ENCODE measurements at regions of chr9 and their contacts with region 1.

Region 1: GRCh38 chr9:9483175-9483574 is 1129.6 kb downstream of the PTPRD start:
- DNase-seq: no peak
- H3K4me3 ChIP-seq: no peak overlapping the region
- H3K27ac ChIP-seq: no peak overlapping the region
- H3K4me1 ChIP-seq: no peaks in the 10 kb centered on the region
- H3K27me3 ChIP-seq: no peaks in the 10 kb centered on the region
- CTCF ChIP-seq: no peak
- EP300 ChIP-seq: no peak
- POLR2A ChIP-seq: no peak

Region 2: DNA sequence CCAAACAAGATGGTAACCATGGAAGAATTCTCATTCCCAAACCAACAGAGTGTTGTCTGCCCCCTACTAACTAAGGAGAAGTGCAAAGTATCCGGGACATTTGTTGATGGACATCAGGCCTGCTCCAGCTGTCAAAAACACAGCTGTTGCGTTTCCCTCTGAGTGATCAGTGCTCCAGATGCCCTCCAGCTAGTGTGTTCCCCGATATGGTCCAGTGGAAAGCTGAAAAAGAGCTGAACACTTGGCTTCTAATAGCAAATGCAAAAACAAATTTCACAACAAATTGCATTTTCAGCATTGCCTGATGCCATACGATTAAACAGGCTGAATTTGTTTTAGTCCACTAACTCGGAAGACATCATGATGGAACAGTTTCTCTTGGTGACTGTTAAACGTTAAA is 269.1 kb before region 1 on chr9:
- intact Hi-C with region 1: no loop called
- DNase-seq: no peak
- H3K4me3 ChIP-seq: no peak overlapping the region
- H3K27ac ChIP-seq: no peak overlapping the region
- H3K4me1 ChIP-seq: no peaks in the 10 kb centered on the region
- H3K27me3 ChIP-seq: no peaks in the 10 kb centered on the region
- CTCF ChIP-seq: no peak
- EP300 ChIP-seq: no peak
- POLR2A ChIP-seq: no peak

Region 3: DNA sequence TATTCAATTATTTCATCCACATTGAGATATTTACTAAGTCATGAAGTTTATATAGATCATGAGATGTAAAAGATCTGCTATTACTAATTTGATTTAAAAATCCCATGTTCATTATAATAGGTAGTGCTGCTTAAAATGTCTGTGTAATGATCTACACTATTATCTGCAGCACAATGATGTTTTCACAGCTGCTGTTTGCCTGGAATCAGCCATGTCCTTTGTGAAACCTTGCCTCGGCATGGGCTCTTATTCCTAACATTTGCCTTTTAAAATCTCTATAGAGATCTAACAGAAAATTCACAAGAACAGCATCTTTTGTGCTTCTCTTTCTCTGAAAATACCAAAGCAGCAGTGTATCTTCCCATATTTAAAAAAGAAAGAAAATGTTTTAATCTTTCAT is 685.1 kb after region 1 on chr9:
- intact Hi-C with region 1: loop called in 1 of 4 experiments (anchors 5 kb)
- DNase-seq: no peak
- H3K4me3 ChIP-seq: no peak overlapping the region
- H3K27ac ChIP-seq: no peak overlapping the region
- H3K4me1 ChIP-seq: no peaks in the 10 kb centered on the region
- H3K27me3 ChIP-seq: no peaks in the 10 kb centered on the region
- CTCF ChIP-seq: no peak
- EP300 ChIP-seq: no peak
- POLR2A ChIP-seq: no peak

Measured in ovary (tissue), 10 donors.